Activated naive CD4-positive, alpha-beta T cell treated with anti-CD3 and anti-CD28 coated beads for 36 hours (primary cell): ENCODE measurements at regions of chr20 and their contacts with region 1.

Region 1: GRCh38 chr20:20875716-20876115 is 163.3 kb upstream of the RALGAPA2 start:
- DNase-seq: no peak
- H3K4me3 Mint-ChIP-seq: no peak overlapping the region
- H3K27ac Mint-ChIP-seq: no peak overlapping the region
- H3K4me1 Mint-ChIP-seq: no peaks in the 10 kb centered on the region
- H3K27me3 Mint-ChIP-seq: peaks cover 15% of the 10 kb centered on the region

Region 2: GRCh38 chr20:20664795-20665589 is 210.7 kb before region 1 on chr20:
- CTCF ChIA-PET with region 1: interaction called, 11 read pairs
- intact Hi-C with region 1: no loop called
- DNase-seq: peak; percentile 22
- H3K4me3 Mint-ChIP-seq: no peak overlapping the region
- H3K27ac Mint-ChIP-seq: no peak overlapping the region
- H3K4me1 Mint-ChIP-seq: peaks cover 24% of the 10 kb centered on the region
- H3K27me3 Mint-ChIP-seq: no peaks in the 10 kb centered on the region

Region 3: DNA sequence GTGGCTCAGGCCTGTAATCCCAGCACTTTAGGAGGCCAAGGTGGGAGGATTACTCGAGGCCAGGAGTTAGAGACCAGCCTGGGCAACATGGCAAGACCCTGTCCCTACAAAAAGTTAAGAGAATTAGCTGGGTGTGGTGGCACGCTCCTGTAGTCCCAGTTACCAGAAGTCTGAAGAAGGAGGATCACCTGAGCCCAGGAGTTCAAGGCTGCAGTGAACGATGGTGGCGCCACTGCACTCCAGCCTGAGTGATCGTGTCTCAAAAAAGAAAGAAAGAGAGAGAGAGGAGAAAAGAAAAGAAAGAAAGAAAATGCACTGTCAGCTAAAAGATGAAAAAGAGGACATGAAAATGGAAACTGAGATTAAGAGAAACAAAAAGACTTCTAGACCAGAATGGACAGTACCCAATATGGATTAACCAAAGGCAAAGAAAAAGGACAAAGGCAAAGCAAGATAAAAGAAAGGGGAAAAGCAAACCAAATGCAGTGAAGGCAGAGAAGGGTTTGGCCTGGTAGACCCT is 154.3 kb before region 1 on chr20:
- CTCF ChIA-PET with region 1: no interaction called
- intact Hi-C with region 1: no loop called
- DNase-seq: no peak
- H3K4me3 Mint-ChIP-seq: no peak overlapping the region
- H3K27ac Mint-ChIP-seq: no peak overlapping the region
- H3K4me1 Mint-ChIP-seq: no peaks in the 10 kb centered on the region
- H3K27me3 Mint-ChIP-seq: no peaks in the 10 kb centered on the region